GM10248 (cell line): ENCODE measurements at regions of chr22 and their contacts with region 1.

Region 1: DNA sequence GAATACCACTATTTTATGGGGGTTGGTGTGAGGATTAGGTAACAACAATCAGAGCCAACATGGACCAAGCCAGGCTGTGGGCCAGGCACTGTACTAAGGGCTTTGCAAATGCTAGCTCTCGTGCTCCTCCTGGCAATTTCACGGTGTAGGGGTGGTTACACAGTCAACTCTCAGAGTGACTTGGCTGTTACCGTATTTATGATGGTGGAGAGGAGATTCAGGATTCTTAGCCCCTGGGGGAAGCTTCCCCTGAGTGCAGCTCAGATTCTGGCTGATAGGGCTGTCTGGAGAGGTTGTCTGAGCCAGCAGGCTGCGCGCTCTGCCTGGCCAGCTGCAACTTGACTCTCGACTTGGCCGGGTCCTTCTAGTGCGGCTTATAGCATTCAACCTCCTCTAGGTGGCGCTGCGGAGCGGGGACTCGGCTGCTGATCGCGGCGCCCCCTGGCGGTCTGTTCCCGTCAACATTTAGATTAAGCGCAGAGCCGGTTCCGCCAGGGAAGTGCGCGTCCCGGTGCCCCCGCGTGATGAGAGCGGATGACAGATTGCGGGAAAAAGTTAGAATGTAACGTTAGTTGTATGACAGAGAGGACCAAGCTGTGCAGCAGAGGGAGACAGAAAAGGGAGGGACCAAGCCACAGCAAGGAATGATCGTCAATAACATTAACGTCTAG is 4.5 kb upstream of the NCF4 start:
- DNase-seq: peak; percentile 82
- CTCF ChIP-seq: peak; percentile 100

Region 2: DNA sequence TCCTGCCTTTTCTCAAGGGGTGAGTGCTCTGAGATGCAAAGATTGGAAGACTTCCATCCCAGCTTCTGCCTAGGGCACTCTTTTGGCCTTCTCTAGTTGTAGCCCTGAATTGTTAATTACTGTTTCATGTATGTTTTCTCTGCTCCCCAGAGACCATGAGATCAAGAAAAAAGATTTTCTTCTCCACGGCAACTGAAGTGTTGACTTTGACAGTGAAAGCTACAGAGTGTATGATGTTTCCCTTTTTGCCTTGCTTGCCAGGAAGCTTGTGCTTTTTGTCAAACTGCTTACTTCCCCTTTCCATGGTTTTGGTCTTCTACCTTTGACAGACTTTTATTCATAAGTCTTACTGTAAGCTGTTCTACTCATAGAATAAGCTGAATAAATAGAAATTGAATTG is 304.0 kb before region 1 on chr22:
- CTCF ChIA-PET with region 1: interaction called, 35 read pairs
- POLR2A ChIA-PET with region 1: no interaction called
- DNase-seq: peak; percentile 58
- CTCF ChIP-seq: no peak

Region 3: GRCh38 chr22:36775964-36776669 is 80.1 kb before region 1 on chr22 and contains the start of gene IFT27:
- CTCF ChIA-PET with region 1: interaction called, 118 read pairs
- POLR2A ChIA-PET with region 1: no interaction called
- DNase-seq: peak; percentile 100
- CTCF ChIP-seq: no peak

Region 4: DNA sequence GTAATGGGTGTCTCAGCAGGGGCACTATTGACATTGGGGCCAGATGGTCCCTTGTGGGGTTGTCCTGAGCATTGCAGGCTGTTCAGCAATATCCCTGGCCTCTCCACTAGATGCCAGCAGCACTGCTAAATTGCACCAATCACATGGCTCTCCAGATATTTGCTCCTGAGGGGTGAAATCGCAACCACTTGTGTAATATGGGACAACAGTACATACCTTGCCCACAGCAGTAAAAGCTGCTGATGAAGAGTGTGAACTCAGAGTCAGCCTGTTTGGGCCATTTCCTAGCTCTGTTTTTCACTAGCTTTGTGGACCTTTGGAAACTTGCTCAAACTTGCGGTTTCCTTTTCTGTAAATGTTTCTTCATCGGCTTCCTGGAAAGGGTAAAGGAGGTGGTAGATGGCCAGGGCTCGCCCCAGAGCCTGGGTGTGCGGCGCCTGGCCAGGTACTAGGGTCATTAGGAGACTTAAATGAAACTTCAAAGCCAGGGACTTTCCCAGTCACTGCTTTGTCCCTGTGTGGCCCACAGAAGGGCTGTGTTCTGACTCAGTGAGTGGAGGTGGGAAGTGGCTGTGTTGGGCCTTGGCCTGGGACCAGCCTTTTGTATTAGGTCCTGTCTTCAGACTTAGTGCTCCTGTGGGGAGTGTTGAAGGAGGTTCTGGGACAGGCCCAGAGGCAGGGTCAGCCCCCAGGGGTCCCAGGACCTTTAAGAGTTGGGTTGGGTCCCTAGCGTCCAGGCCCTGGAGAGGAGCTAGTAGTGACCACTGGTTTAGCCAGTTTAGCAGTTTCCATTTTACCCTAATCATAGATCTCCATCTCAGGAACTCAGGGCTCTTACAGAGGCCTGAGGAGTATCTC is 17.7 kb after region 1 on chr22:
- CTCF ChIA-PET with region 1: interaction called, 86 read pairs
- POLR2A ChIA-PET with region 1: interaction called, 4 read pairs
- DNase-seq: peak; percentile 78
- CTCF ChIP-seq: peak; percentile 61

Region 5: GRCh38 chr22:36901411-36902142 is 45.3 kb after region 1 on chr22:
- CTCF ChIA-PET with region 1: interaction called, 29 read pairs
- POLR2A ChIA-PET with region 1: no interaction called
- DNase-seq: peak; percentile 80
- CTCF ChIP-seq: no peak

Region 6: GRCh38 chr22:36936362-36937071 is 80.3 kb after region 1 on chr22:
- CTCF ChIA-PET with region 1: interaction called, 12 read pairs
- POLR2A ChIA-PET with region 1: interaction called, 6 read pairs
- DNase-seq: no peak
- CTCF ChIP-seq: no peak

Region 7: GRCh38 chr22:37063431-37064420 is 207.5 kb after region 1 on chr22:
- CTCF ChIA-PET with region 1: no interaction called
- POLR2A ChIA-PET with region 1: no interaction called
- DNase-seq: no peak
- CTCF ChIP-seq: no peak